Right ventricle myocardium superior (tissue), 1 donor: ENCODE measurements at regions of chr1 and their contacts with region 1.

Region 1: DNA sequence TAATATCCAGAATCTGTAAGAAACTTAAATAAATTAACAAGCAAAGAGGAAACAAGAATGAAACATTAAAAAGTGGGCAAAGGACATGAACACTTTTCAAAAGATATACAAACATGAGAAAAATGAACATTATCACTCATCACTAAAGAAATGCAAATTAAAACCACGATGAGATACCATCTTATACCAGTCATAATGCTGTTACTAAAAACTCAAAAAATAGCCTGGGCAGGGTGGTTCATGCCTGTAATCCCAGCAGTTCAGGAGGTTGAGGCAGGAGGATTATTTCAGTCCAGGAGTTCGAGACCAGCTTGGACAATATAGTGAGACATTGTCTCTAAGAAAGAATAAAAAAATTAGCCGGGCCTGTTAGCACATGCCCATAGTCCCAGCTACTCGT is 6.1 kb downstream of the ZNF124 start:
- DNase-seq: no peak
- ATAC-seq: no peak

Region 2: DNA sequence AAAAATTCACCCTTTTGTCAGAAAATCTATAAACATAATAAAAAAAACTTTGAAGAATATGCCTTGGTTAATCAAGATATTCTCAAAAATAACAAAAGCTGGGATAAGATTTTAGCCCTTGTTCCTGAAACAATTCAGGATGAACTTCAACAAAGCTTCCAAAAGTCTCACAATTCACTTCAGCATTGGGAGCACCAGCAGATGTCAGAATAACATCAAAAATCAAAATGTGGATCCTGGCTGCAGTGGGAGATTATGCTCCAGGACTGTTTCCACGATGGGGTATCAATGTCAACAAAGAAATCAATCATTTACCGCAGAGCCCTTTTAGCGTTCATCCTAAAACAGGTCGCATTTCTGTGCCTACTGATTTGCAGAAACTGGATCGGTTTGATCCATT is 122.3 kb before region 1 on chr1:
- intact Hi-C with region 1: no loop called
- DNase-seq: no peak
- ATAC-seq: no peak

Region 3: DNA sequence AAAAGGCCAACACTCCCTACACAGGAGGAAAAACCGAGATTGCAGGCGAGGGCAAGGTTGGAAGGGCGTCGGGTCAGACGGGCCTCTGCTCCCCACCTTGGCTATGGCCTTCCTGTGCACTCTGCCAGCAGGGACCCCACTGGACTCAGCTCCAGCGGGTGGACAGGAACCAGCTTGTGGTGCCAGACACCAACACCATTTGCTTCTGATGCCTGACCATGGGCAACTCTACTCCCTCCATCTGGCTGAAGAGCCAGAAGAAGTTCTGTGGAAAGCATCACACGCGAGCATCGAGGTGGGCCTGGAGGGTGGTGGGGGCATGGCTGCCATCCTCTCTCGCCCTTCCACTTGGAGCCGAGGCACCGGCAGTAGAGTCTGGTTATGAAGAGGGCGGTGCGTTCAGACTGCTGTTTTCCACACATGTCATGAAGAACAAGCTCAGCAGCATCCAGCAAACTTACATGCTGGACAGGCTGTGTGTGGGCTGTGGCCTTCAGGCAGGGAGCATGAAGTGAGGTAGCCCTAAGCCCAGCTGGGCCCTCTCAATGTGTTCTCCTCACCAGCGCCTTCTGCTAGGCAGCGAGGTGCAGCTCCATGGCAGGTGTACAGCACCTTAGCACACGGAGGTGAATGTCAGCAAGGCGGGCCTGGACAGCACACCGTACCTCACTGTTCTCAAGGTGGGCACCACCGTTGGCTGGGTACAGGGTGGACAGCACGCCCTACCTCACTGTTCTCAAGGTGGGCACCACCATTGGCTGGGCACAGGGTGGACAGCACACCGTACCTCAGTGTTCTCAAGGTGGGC is 45.9 kb before region 1 on chr1:
- intact Hi-C with region 1: loop called (anchors 5 kb)
- DNase-seq: no peak
- ATAC-seq: no peak